PC-3 (cell line): ENCODE measurements at regions of chr14 and their contacts with region 1.

Region 1: DNA sequence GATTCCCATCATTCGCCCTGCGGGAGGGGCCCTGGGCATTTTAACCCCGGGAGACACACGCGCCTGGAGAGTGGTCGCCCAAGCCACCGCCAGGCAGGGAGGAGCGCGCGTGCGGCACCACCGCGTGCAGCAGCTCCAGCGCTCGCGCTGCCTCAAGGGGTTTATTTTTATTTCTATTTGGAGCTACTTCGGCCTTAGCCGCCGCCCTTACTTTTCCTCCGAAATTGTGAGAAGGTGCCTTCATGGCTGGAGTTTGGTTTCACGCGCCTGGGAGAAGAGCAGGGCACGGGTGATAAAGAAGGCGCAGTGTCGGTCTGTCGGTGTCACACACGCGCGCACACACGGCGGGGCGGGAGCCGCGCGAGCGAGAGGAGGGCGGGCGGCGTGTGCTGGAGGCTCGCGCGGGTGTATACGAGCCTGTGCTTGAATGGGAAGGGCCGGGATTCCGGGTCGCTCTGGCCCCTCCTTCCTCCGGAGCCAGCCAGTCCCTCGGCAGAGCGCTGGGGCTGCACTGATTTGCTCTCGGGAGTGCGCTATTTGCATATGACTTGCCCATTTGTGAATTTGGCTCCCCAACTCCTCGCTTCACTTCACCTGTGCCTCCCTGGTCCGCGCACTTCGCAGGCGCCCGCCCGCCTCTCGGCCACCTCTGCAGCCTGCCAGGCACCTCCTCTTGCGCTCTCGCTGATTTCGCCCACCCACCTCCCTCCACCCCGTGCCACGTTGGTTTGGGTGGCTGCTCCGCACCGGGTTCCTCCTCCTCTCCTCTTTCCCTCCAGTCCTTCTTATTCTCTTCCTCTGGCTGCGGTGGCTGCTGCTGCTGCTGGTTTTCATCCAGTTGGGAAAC is 932.3 kb downstream of the DIO2 start:
- DNase-seq: peak; percentile 93
- ATAC-seq: peak; percentile 96
- H3K4me3 ChIP-seq: peak overlapping the region; percentile 82
- H3K27ac ChIP-seq: peak overlapping the region; percentile 31
- H3K4me1 ChIP-seq: peaks cover 15% of the 10 kb centered on the region; the same call in 1 of the 2 replicates
- H3K27me3 ChIP-seq: no peaks in the 10 kb centered on the region
- CTCF ChIP-seq: no peak

Region 2: GRCh38 chr14:79324788-79325467 is 45.9 kb after region 1 on chr14:
- CTCF ChIA-PET with region 1: no interaction called
- POLR2A ChIA-PET with region 1: no interaction called
- intact Hi-C with region 1: loop called (anchors 2 kb)
- DNase-seq: peak; percentile 71
- ATAC-seq: peak; percentile 95
- H3K4me3 ChIP-seq: no peak overlapping the region
- H3K27ac ChIP-seq: no peak overlapping the region
- H3K4me1 ChIP-seq: peaks cover 14% of the 10 kb centered on the region
- H3K27me3 ChIP-seq: no peaks in the 10 kb centered on the region
- CTCF ChIP-seq: no peak

Region 3: DNA sequence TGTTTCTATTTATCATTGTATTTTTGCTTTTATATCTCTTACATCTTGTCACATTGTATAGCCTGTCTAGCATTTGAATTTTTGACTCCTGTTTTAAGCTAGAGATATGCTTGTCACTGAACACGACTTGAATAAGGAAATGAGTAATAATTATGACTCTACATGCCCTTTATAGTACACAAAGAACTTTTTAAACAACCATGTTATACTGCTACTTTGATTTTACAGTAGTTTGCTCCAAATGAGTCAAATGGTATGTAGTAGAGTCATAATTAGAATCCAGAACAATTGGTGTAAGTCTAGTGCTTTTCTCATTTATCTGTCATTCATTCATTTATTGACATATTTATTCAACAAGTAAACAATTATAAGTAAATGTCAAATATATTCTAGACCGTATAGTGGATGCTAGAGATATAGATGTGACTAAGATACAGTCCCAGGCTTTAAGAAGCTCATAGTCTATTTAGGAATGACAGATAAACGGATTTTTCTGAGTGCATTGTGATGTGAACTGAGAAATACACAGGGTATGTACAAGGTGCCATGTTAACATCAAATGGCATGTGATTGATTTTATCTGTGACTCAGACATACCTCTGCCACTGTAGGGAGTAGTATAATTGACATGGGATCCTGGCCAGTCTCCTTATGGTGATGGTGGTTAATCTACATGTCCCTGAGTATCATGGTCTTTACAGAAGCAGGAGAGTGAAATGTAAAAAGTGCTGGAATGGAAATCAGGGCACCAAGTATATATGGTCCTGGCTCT is 132.6 kb after region 1 on chr14:
- CTCF ChIA-PET with region 1: interaction called, 4 read pairs
- POLR2A ChIA-PET with region 1: no interaction called
- intact Hi-C with region 1: loop called (anchors 2 kb)
- DNase-seq: peak; percentile 62
- ATAC-seq: peak; percentile 76
- H3K4me3 ChIP-seq: no peak overlapping the region
- H3K27ac ChIP-seq: peak overlapping the region; percentile 61
- H3K4me1 ChIP-seq: peaks cover 39% of the 10 kb centered on the region
- H3K27me3 ChIP-seq: no peaks in the 10 kb centered on the region
- CTCF ChIP-seq: no peak

Region 4: DNA sequence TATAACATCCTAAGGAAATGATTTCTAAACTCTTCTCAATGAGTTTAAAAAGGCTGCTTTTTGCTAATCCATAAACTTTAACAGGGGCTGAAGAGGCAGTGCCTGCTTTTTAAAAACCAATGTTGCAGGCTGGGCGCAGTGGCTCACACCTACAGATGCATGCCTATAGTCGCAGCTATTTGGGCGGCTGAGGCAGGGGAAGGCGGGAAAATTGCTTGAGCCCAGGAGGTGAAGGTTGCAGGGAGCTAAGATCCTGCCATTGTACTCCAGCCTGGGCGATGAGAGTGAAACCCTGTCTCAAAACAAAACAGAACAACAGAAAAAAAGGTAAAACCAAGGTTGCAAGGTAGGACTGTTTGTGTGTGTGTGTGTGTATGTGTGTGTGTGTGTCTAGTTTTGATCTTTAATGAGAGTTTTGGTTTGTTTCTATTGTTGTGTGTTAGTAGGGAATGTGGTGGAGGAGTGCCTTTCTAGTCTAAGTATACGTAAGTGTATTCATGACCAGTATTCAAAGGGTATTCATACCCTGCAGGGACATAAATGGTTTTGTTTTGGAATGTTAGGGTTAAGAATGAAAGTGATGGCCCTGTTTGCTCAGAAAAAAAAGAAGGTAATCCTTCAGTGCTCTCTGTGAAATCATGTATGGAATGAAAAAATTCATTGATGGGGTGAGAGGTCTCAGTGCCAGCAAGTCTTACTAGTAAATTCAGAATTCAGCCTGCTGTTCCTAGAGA is 401.2 kb after region 1 on chr14:
- CTCF ChIA-PET with region 1: no interaction called
- POLR2A ChIA-PET with region 1: no interaction called
- intact Hi-C with region 1: loop called (anchors 10 kb)
- DNase-seq: no peak
- ATAC-seq: no peak
- H3K4me3 ChIP-seq: no peak overlapping the region
- H3K27ac ChIP-seq: no peak overlapping the region
- H3K4me1 ChIP-seq: no peaks in the 10 kb centered on the region
- H3K27me3 ChIP-seq: no peaks in the 10 kb centered on the region
- CTCF ChIP-seq: no peak